B cell (primary cell): ENCODE measurements at regions of chr10 and their contacts with region 1.

Region 1: GRCh38 chr10:61024856-61025600 is 81.0 kb upstream of the RHOBTB1 start:
- DNase-seq: peak; percentile 18
- ATAC-seq: peak; percentile 33
- H3K4me3 ChIP-seq: no peak overlapping the region
- H3K4me3 Mint-ChIP-seq: no peak overlapping the region
- H3K27ac ChIP-seq: no peak overlapping the region
- H3K27ac Mint-ChIP-seq: no peak overlapping the region
- H3K4me1 ChIP-seq: no peaks in the 10 kb centered on the region
- H3K4me1 Mint-ChIP-seq: no peaks in the 10 kb centered on the region
- H3K27me3 ChIP-seq: peaks cover 0 to 7% (median 3%) of the 10 kb centered on the region in 4 experiments
- H3K27me3 Mint-ChIP-seq: peaks cover 23% of the 10 kb centered on the region
- CTCF ChIP-seq: peak; percentile 72

Region 2: DNA sequence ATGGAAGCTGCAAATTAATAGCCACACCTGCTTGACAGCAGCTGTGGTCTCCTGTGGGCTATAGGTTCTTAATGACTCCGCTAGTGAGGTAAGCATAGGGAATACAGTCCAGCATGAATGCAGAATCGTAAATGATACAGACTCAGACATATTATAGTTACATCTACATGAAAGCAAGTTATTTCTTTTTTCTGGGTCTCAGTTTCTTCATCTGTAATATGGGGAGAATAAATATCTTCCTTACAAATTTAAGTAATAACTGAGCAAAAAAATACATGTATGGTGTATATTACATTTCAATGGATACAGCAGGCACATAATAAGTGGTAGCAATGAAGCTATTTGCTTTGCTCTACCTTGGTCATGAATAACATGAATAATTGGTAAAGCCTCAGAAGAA is 164.9 kb after region 1 on chr10:
- CTCF ChIA-PET with region 1: interaction called, 3 read pairs
- POLR2A ChIA-PET with region 1: no interaction called
- intact Hi-C with region 1: loop called (anchors 5 kb)
- DNase-seq: no peak
- ATAC-seq: no peak
- H3K4me3 ChIP-seq: no peak overlapping the region
- H3K4me3 Mint-ChIP-seq: no peak overlapping the region
- H3K27ac ChIP-seq: no peak overlapping the region
- H3K27ac Mint-ChIP-seq: no peak overlapping the region
- H3K4me1 ChIP-seq: no peaks in the 10 kb centered on the region
- H3K4me1 Mint-ChIP-seq: no peaks in the 10 kb centered on the region
- H3K27me3 ChIP-seq: no peaks in the 10 kb centered on the region
- H3K27me3 Mint-ChIP-seq: peaks cover 20% of the 10 kb centered on the region
- CTCF ChIP-seq: no peak

Region 3: GRCh38 chr10:61423178-61423577 is 398.1 kb after region 1 on chr10:
- CTCF ChIA-PET with region 1: no interaction called
- POLR2A ChIA-PET with region 1: no interaction called
- intact Hi-C with region 1: no loop called
- DNase-seq: no peak
- ATAC-seq: no peak
- H3K4me3 ChIP-seq: no peak overlapping the region
- H3K4me3 Mint-ChIP-seq: no peak overlapping the region
- H3K27ac ChIP-seq: no peak overlapping the region
- H3K27ac Mint-ChIP-seq: no peak overlapping the region
- H3K4me1 ChIP-seq: no peaks in the 10 kb centered on the region
- H3K4me1 Mint-ChIP-seq: no peaks in the 10 kb centered on the region
- H3K27me3 ChIP-seq: no peaks in the 10 kb centered on the region
- H3K27me3 Mint-ChIP-seq: peaks cover 3% of the 10 kb centered on the region
- CTCF ChIP-seq: no peak